CD8-positive, alpha-beta T cell (primary cell): ENCODE measurements at regions of chr12 and their contacts with region 1.

Region 1: GRCh38 chr12:12757121-12757520 is 28.3 kb upstream of the APOLD1 start:
- DNase-seq: no peak
- ATAC-seq: no peak
- H3K4me3 ChIP-seq: no peak overlapping the region
- H3K4me3 Mint-ChIP-seq: no peak overlapping the region
- H3K27ac ChIP-seq: no peak overlapping the region
- H3K27ac Mint-ChIP-seq: no peak overlapping the region
- H3K4me1 ChIP-seq: no peaks in the 10 kb centered on the region
- H3K4me1 Mint-ChIP-seq: no peaks in the 10 kb centered on the region
- H3K27me3 ChIP-seq: no peaks in the 10 kb centered on the region
- H3K27me3 Mint-ChIP-seq: no peaks in the 10 kb centered on the region
- CTCF ChIP-seq: no peak

Region 2: GRCh38 chr12:13404631-13405473 is 647.7 kb after region 1 on chr12:
- CTCF ChIA-PET with region 1: no interaction called
- POLR2A ChIA-PET with region 1: no interaction called
- intact Hi-C with region 1: loop called in 1 of 2 experiments (anchors 10 kb)
- DNase-seq: no peak
- ATAC-seq: no peak
- H3K4me3 ChIP-seq: no peak overlapping the region
- H3K4me3 Mint-ChIP-seq: no peak overlapping the region
- H3K27ac ChIP-seq: no peak overlapping the region
- H3K27ac Mint-ChIP-seq: no peak overlapping the region
- H3K4me1 ChIP-seq: no peaks in the 10 kb centered on the region
- H3K4me1 Mint-ChIP-seq: no peaks in the 10 kb centered on the region
- H3K27me3 ChIP-seq: no peaks in the 10 kb centered on the region
- H3K27me3 Mint-ChIP-seq: peaks cover 19% of the 10 kb centered on the region
- CTCF ChIP-seq: no peak